Astrocyte of the cerebellum (primary cell): ENCODE measurements at regions of chr3 and their contacts with region 1.

Region 1: GRCh38 chr3:71725279-71725991 is at the start of gene EIF4E3:
- DNase-seq: no peak
- H3K4me3 ChIP-seq: peak within 1 kb of the TSS; percentile 62
- CTCF ChIP-seq: no peak

Region 2: GRCh38 chr3:71466483-71466882 is 259.0 kb before region 1 on chr3:
- in situ Hi-C with region 1: no loop called
- DNase-seq: no peak
- H3K4me3 ChIP-seq: no peak overlapping the region
- CTCF ChIP-seq: no peak

Region 3: DNA sequence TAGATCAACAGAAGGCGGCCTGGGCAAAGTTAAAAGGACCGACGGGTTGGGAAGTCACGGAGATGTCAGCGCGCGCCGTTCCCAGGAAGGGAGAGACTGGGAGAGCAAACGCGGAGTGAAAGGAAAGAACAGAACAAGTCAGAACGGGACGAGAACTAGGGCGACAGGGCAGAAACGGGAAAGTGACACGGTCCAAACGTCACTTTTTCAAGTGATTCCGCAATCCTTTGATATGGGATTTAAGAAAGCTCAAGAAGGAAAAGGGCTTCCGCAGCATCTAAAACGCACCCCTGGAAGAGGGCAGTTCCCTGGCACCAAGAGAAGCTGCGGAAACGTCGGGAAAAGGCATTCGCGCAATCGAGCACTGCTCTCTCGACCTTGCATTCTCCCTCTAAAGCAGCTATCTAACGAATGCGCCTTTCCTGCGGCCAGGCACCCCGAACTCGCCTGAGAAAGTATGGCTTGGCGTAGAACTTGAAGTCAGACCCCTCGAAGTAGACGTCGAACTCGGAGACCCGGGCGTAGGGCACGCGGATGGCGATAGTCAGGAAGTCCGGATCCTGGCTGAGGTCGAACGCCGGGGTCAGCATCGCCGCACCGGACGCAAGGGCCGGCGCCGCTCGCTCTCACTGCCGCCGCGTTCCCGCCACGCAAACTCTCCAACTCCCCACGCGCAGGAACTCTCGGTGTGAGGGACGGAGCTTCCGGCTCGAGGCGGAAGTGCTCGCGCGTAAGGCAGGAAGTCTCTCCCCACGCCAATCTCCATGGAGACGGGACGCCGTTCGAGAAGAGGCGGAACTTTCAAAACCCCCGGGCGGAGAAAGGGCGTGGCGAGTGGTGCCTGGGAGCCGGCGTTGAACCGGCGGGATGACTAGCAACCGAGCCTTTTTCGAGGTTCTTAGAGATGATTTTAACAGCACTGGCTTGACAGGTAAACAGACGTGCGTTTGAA is 1122.6 kb after region 1 on chr3 and contains the start of gene SHQ1:
- in situ Hi-C with region 1: loop called (anchors 25 kb)
- DNase-seq: peak; percentile 87
- H3K4me3 ChIP-seq: peak within 1 kb of the TSS; percentile 94
- CTCF ChIP-seq: no peak